ENCODE measurements at regions of chr13 and their contacts with region 1.

Region 1: DNA sequence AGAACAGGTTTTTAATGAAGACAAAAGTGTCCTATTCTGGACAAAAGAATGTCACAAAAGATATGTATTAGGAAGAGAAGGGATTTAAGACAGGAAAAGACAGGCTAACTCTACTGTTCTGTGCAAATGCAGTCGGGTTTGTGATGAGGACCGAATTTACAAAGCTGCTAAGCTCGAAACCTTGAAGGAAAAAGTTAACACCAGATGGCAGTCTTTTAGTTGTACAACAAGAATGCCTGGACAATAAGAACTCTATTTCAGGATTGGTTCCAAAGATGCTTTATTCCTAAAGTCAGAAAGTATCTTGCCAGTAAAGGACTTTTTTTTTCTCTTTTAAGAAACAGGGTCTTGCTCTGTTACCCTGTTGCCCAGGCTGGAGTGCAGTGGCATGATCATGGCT is 51.1 kb downstream of the HS6ST3 start:
- DNase-seq: no peak
- ATAC-seq: no peak
- H3K4me3 ChIP-seq: no peak overlapping the region
- H3K4me3 Mint-ChIP-seq: no peak overlapping the region
- H3K27ac ChIP-seq: no peak overlapping the region
- H3K27ac Mint-ChIP-seq: no peak overlapping the region
- H3K4me1 ChIP-seq: no peaks in the 10 kb centered on the region
- H3K4me1 Mint-ChIP-seq: no peaks in the 10 kb centered on the region
- H3K27me3 ChIP-seq: no peaks in the 10 kb centered on the region
- H3K27me3 Mint-ChIP-seq: no peaks in the 10 kb centered on the region
- CTCF ChIP-seq: no peak

Region 2: DNA sequence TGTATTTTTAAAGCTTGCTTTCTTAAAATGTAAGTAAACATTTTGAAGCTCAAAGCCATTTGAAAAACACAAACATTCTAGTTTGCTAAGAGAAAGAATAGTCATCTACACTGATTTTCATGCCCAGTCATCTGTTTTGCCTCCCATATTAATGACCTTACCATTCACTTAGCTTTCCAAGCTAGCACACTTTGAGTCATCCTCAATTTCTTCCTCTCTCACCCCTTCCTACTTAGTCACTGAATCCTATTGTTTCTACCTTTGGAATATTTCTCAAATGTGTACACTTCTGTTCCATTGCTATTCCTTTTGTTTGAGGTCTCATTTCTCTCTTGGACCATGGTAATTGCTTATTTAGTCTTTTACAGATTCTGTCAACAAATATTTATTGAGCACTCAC is 58.4 kb before region 1 on chr13:
- CTCF ChIA-PET with region 1: no interaction called
- POLR2A ChIA-PET with region 1: no interaction called
- intact Hi-C with region 1: loop called in 1 of 2 experiments (anchors 2 kb)
- DNase-seq: no peak
- ATAC-seq: no peak
- H3K4me3 ChIP-seq: no peak overlapping the region
- H3K4me3 Mint-ChIP-seq: no peak overlapping the region
- H3K27ac ChIP-seq: no peak overlapping the region
- H3K27ac Mint-ChIP-seq: no peak overlapping the region
- H3K4me1 ChIP-seq: no peaks in the 10 kb centered on the region
- H3K4me1 Mint-ChIP-seq: no peaks in the 10 kb centered on the region
- H3K27me3 ChIP-seq: peaks cover 0 to 6% of the 10 kb centered on the region in 2 experiments
- H3K27me3 Mint-ChIP-seq: peaks cover 28% of the 10 kb centered on the region
- CTCF ChIP-seq: no peak